Activated CD8-positive, alpha-beta T cell treated with anti-CD3 and anti-CD28 coated beads, Interleukin-2, amount 10 ng/mL, durations not matched to agents 7 days and 5 days (primary cell): ENCODE measurements at regions of chr2 and their contacts with region 1.

Region 1: DNA sequence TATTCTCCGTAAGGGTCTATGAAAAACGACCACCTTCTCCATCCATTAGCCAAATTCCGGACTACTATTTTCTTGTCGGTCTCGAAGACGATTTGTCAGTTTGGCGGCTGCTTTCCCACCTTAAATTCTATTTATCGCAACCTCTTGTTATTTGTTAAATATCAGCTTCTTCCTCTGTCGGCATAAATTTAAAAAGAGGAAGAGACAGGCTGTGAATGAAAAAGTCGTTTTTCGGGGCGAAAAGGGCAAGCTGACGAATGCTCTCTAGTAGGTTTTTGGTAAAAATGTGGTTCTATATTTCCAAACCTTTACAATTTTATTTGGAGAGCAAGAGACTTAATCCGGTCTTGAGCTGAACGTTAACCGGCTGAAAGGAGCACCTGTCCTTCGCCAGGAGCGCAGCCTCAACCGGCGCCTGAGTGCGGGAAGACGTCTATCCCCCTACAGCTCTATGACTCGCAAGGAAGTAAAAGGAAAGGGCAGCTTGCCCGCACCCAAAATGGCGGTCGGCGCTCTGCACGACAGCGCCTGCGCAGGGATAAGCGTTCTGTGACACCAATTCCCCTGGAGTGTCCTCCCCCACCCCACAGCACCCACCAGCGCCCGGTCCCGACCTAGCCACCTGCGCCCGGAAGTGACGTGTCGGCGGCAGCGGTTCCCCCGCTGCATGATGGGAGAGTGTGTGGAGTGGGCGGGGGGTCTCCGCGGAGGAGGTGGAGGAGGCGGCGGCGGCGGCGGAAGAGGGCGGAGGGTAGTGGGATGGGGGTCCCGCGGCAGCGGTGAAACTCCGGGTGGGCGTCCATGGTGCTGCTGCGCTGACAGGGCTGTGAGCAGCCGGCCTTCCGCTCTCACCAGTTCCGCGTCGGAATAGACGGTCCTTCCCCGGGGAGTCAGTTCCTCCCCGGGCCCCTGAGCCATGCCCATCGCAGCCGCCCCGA is at the start of gene AFTPH:
- DNase-seq: peak; percentile 100
- ATAC-seq: peak; percentile 93
- H3K4me3 Mint-ChIP-seq: peak within 1 kb of the TSS; percentile 99
- H3K27ac Mint-ChIP-seq: peak within 1 kb of the TSS; percentile 99
- H3K4me1 Mint-ChIP-seq: peaks cover 36% of the 10 kb centered on the region
- H3K27me3 Mint-ChIP-seq: peaks cover 6% of the 10 kb centered on the region
- total RNA-seq, gene AFTPH: 26.3 to 27.2 TPM

Region 2: GRCh38 chr2:64488050-64488974 is 35.6 kb before region 1 on chr2:
- CTCF ChIA-PET with region 1: interaction called, 22 read pairs
- POLR2A ChIA-PET with region 1: no interaction called
- DNase-seq: peak; percentile 86
- ATAC-seq: peak; percentile 78
- H3K4me3 Mint-ChIP-seq: no peak overlapping the region
- H3K27ac Mint-ChIP-seq: no peak overlapping the region
- H3K4me1 Mint-ChIP-seq: peaks cover 23% of the 10 kb centered on the region
- H3K27me3 Mint-ChIP-seq: peaks cover 26% of the 10 kb centered on the region

Region 3: GRCh38 chr2:64554117-64554516 is 30.2 kb after region 1 on chr2:
- CTCF ChIA-PET with region 1: interaction called, 159 read pairs
- POLR2A ChIA-PET with region 1: interaction called, 3 read pairs
- DNase-seq: no peak
- ATAC-seq: no peak
- H3K4me3 Mint-ChIP-seq: no peak overlapping the region
- H3K27ac Mint-ChIP-seq: no peak overlapping the region
- H3K4me1 Mint-ChIP-seq: peaks cover 1% of the 10 kb centered on the region
- H3K27me3 Mint-ChIP-seq: no peaks in the 10 kb centered on the region

Region 4: GRCh38 chr2:64586883-64587481 is 63.0 kb after region 1 on chr2:
- CTCF ChIA-PET with region 1: interaction called, 16 read pairs
- POLR2A ChIA-PET with region 1: no interaction called
- DNase-seq: no peak
- ATAC-seq: no peak
- H3K4me3 Mint-ChIP-seq: no peak overlapping the region
- H3K27ac Mint-ChIP-seq: no peak overlapping the region
- H3K4me1 Mint-ChIP-seq: peaks cover 6% of the 10 kb centered on the region
- H3K27me3 Mint-ChIP-seq: no peaks in the 10 kb centered on the region

Region 5: DNA sequence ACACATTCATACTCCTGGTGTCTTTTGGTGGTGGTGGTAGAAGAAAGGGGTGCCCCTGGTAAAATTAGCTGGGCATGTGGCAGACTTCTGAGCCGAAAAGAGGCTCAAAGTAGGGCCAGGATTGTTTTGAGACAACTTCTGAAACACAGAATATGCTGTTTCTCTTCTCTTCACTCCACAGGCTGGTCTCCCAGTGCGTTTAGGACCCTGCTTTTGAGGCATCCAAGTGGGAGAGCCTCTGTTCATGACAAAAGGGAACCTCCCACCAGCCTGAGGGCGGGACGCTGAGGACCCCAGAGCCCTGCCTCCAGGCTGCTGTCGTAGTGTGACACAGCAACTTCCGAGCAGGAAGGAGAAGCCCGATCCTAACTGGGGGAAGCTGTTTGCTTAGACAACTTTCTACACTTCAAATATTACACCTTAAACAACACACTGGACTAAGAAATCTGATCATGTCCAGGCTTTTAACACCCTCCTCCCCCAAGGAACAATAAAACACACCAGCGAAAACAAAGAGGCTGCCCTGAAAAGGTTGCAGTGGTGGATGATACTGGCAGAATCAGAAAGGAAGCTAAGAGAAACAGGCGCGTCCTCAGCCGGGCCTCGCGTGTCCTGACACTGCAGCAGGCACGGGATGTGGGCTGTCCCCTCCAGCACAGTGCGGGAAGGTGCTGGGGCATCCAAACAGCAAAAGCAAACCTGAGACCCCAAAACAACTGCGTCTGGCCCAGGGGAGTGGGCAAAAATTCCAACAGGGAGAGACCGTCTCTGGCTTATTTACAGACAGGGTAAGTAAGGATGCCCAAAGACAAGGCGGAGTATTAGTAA is 120.5 kb after region 1 on chr2:
- CTCF ChIA-PET with region 1: interaction called, 16 read pairs
- POLR2A ChIA-PET with region 1: interaction called, 9 read pairs
- DNase-seq: peak; percentile 82
- ATAC-seq: peak; percentile 87
- H3K4me3 Mint-ChIP-seq: peak overlapping the region; percentile 83
- H3K27ac Mint-ChIP-seq: peak overlapping the region; percentile 93
- H3K4me1 Mint-ChIP-seq: peaks cover 91% of the 10 kb centered on the region
- H3K27me3 Mint-ChIP-seq: no peaks in the 10 kb centered on the region

Region 6: GRCh38 chr2:64873472-64873924 is 349.6 kb after region 1 on chr2:
- CTCF ChIA-PET with region 1: interaction called, 26 read pairs
- POLR2A ChIA-PET with region 1: no interaction called
- DNase-seq: peak; percentile 85
- ATAC-seq: peak; percentile 97
- H3K4me3 Mint-ChIP-seq: no peak overlapping the region
- H3K27ac Mint-ChIP-seq: peak overlapping the region; percentile 12
- H3K4me1 Mint-ChIP-seq: peaks cover 6% of the 10 kb centered on the region
- H3K27me3 Mint-ChIP-seq: peaks cover 16% of the 10 kb centered on the region